Activated naive CD4-positive, alpha-beta T cell treated with anti-CD3 and anti-CD28 coated beads, Interleukin-2, amount 10 ng/mL, durations not matched to agents 7 days and 5 days (primary cell): ENCODE measurements at regions of chr6 and their contacts with region 1.

Region 1: DNA sequence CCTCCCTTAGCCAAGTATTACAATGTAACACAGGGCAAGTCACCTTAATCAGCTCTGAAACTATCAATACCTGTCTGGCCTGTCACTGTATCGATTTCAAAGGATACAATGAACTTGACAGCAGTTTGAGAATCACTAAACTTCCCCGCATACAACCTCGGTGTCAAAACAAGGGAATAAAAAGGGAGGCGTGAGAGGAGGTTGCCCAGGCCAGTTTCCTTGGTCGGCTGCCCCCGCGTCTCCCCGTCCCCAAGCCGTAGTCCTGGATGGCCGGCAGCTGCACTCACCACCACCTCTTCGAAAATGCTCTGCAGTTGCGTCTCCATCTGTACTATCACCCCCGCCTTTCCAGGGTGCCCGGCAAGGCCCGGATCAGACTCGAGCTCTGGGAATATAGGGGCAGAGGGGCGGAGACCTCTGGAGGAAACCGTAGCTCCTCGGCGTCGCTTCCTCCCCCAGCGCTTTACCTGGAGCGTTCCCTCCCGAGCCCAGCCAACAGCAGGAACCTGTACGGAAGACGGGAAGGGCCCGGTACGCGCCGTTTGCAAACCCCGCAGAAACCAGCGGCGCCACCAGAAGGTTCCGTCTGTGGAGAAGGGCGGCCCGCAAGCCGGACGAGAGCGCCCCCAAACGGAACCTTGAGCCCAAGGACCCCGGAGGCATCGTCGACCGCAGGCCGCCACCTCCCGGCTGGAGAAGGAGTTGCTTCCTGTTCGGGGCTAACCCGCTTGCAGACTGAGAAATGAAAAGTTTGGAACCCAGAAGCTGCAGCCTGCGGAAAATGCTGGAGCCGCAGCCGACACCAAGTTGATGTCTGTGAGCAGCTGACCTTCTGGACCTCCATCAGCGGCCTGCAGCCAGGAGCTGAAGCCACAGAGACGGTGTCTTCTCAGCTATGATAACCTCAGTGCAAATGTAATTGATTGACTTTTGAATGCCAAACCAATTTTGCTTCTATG is at the start of gene MED23:
- DNase-seq: peak; percentile 94
- H3K4me3 Mint-ChIP-seq: peak within 1 kb of the TSS; percentile 98
- H3K27ac Mint-ChIP-seq: peak within 1 kb of the TSS; percentile 96
- H3K4me1 Mint-ChIP-seq: peaks cover 31% of the 10 kb centered on the region
- H3K27me3 Mint-ChIP-seq: peaks cover 6% of the 10 kb centered on the region

Region 2: GRCh38 chr6:131199568-131200272 is 428.3 kb before region 1 on chr6:
- CTCF ChIA-PET with region 1: interaction called, 23 read pairs
- DNase-seq: peak; percentile 85
- H3K4me3 Mint-ChIP-seq: peak overlapping the region; percentile 72
- H3K27ac Mint-ChIP-seq: peak overlapping the region; percentile 97
- H3K4me1 Mint-ChIP-seq: peaks cover 63% of the 10 kb centered on the region
- H3K27me3 Mint-ChIP-seq: no peaks in the 10 kb centered on the region

Region 3: GRCh38 chr6:131213501-131213990 is 414.5 kb before region 1 on chr6:
- CTCF ChIA-PET with region 1: no interaction called
- DNase-seq: no peak
- H3K4me3 Mint-ChIP-seq: no peak overlapping the region
- H3K27ac Mint-ChIP-seq: no peak overlapping the region
- H3K4me1 Mint-ChIP-seq: peaks cover 26% of the 10 kb centered on the region
- H3K27me3 Mint-ChIP-seq: no peaks in the 10 kb centered on the region

Region 4: DNA sequence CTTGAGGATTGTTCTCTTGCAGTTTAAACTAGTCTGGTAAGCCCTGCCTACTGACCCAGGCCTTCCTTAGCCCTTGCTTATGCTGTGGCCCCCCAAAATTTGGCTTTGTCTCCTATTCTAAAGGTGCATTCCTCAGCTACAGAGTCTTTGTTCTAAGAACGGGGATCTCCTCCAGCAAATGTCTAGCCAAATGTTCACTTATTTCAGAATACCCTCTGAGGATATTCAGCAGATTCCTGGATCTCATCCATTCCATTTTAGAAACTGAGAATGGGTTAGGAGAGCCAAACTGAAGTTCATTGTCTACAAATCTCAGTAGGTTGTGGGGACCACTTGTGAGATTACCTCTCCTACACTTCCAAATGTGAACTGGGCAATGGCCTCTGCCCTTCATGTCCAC is 219.2 kb before region 1 on chr6:
- CTCF ChIA-PET with region 1: no interaction called
- DNase-seq: no peak
- H3K4me3 Mint-ChIP-seq: no peak overlapping the region
- H3K27ac Mint-ChIP-seq: no peak overlapping the region
- H3K4me1 Mint-ChIP-seq: no peaks in the 10 kb centered on the region
- H3K27me3 Mint-ChIP-seq: no peaks in the 10 kb centered on the region

Region 5: GRCh38 chr6:131488780-131489179 is 139.2 kb before region 1 on chr6:
- CTCF ChIA-PET with region 1: no interaction called
- DNase-seq: no peak
- H3K4me3 Mint-ChIP-seq: no peak overlapping the region
- H3K27ac Mint-ChIP-seq: no peak overlapping the region
- H3K4me1 Mint-ChIP-seq: no peaks in the 10 kb centered on the region
- H3K27me3 Mint-ChIP-seq: peaks cover 4% of the 10 kb centered on the region

Region 6: DNA sequence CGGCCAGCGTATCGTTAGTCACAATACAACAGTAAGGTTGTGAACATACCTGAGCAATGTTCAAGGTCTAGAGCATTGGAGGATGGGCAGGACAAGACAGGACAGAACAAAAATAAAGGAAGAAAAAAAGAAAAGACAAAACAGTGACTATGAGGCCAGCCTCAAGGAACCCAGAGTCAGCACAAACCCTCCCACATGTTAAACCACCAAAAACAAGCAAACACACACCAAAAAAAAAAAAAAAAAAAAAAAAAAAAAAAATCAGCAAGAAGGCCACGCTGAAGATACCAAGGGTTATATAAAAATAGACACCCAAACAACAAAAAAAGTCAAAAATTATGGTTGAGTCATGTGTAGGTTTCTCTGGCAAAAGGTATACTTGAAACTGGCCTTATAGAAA is 12.7 kb before region 1 on chr6:
- CTCF ChIA-PET with region 1: interaction called, 15 read pairs
- DNase-seq: no peak
- H3K4me3 Mint-ChIP-seq: no peak overlapping the region
- H3K27ac Mint-ChIP-seq: no peak overlapping the region
- H3K4me1 Mint-ChIP-seq: no peaks in the 10 kb centered on the region
- H3K27me3 Mint-ChIP-seq: no peaks in the 10 kb centered on the region